ENCODE measurements at regions of chr9 and their contacts with region 1.

Region 1: DNA sequence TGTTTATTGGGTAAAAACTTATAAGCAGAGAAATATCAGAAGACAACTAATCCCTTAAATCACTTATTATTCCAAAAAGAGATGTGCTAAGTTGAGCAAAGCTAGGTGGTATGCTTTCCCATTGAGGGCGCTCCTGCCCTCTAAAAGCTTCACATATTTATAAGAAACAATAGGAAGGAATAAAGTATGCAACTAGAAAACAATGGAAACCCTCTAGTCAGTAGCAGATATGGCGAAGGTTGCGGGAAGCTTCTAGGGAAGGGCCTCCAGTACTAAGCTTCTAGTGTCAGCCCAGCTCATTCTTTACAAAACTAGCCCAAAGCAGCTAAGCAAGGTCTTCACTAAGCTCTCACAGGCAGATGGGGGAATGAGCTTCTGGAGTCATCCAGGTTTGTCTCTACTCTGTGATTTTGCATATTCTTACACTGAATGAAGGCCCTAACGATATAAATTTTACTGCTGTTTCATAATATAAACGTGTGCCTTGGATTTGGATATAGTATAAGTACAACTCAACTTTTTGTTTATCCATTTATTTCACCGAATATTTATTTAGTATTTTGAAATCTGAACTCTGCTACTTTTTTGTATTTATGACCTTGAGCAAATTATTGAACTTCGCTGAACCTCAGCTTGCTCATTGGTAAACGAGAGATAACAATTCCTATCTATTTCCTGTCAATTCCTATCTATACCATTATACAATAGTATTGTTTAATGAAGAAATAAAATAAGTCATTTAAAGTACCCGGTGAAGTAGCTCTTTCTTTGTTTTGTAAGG is 571.4 kb downstream of the ELAVL2 start:
- DNase-seq: no peak

Region 2: DNA sequence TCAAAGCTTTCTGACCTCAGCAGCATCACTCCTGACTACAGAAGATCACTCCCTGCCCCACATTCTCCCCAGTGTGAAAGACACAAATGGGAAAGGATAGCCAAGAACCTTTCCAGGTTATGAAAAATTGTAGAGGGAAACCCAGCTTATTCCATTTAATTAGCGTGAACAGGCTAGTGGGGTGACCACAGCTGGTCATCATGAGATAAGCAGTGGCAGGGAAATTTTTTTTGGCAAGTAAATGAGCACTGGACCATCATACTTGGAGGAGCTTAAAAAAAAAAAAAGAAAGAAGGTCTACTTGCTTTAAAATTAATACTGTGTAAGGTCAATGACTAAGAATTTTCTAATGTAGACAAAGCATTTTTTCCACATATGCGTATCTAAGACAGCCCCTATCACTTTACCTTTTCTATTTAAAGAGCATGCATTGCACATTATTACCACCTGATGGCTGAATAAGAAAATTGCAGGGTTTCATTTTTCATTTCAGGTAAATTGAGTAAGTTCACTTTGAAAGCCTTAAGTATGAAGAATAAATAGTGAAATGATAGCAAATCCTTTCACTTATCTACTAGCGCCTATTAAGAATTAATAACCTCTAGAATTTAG is 447.8 kb after region 1 on chr9:
- intact Hi-C with region 1: loop called in 1 of 2 experiments (anchors 5 kb)
- DNase-seq: no peak